Naive thymus-derived CD4-positive, alpha-beta T cell (primary cell): ENCODE measurements at regions of chr12 and their contacts with region 1.

Region 1: DNA sequence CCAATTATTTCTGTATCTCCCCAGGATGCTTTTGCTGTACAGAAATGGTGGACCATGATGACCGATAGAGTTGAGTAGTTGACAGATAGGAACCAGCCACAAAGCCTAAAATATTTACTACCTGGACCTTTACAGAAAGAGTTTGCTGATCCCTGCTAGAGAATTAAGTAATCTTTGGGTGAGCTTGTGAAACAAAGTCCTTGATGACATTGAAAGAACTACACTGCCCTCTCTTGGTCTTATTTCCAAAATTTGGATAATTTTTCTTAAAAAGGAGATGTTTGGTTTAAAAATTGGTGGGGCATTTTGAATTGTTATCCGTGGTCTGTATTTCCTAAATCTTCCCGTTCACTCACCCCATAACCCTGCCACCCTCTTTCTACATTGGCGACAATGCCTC is 13.7 kb upstream of the TCTN1 start:
- DNase-seq: peak in 7 of 9 donors; percentile 36 to 69 (median 56)
- ATAC-seq: peak; percentile 70
- H3K4me3 ChIP-seq: no peak overlapping the region
- H3K4me3 Mint-ChIP-seq: no peak overlapping the region
- H3K27ac ChIP-seq: no peak overlapping the region
- H3K27ac Mint-ChIP-seq: peak overlapping the region in 6 of 9 donors; percentile 6 to 63 (median 24)
- H3K4me1 ChIP-seq: no peaks in the 10 kb centered on the region
- H3K4me1 Mint-ChIP-seq: peaks cover 4 to 21% (median 15%) of the 10 kb centered on the region in 7 donors
- H3K27me3 ChIP-seq: no peaks in the 10 kb centered on the region
- H3K27me3 Mint-ChIP-seq: no peaks in the 10 kb centered on the region

Region 2: GRCh38 chr12:110100315-110100970 is 499.8 kb before region 1 on chr12:
- CTCF ChIA-PET with region 1: interaction called, 3 read pairs
- POLR2A ChIA-PET with region 1: no interaction called
- intact Hi-C with region 1: loop called (anchors 1 to 5 kb)
- DNase-seq: peak in 8 of 9 donors; percentile 33 to 60 (median 55)
- ATAC-seq: peak; percentile 92
- H3K4me3 ChIP-seq: no peak overlapping the region
- H3K4me3 Mint-ChIP-seq: peak overlapping the region in 2 of 10 donors; percentile 12 to 44
- H3K27ac ChIP-seq: no peak overlapping the region
- H3K27ac Mint-ChIP-seq: peak overlapping the region in 4 of 9 donors; percentile 3 to 69 (median 42)
- H3K4me1 ChIP-seq: peaks cover 3 to 4% of the 10 kb centered on the region in 2 donors
- H3K4me1 Mint-ChIP-seq: peaks cover 0 to 13% (median 8%) of the 10 kb centered on the region in 7 donors
- H3K27me3 ChIP-seq: no peaks in the 10 kb centered on the region
- H3K27me3 Mint-ChIP-seq: no peaks in the 10 kb centered on the region

Region 3: DNA sequence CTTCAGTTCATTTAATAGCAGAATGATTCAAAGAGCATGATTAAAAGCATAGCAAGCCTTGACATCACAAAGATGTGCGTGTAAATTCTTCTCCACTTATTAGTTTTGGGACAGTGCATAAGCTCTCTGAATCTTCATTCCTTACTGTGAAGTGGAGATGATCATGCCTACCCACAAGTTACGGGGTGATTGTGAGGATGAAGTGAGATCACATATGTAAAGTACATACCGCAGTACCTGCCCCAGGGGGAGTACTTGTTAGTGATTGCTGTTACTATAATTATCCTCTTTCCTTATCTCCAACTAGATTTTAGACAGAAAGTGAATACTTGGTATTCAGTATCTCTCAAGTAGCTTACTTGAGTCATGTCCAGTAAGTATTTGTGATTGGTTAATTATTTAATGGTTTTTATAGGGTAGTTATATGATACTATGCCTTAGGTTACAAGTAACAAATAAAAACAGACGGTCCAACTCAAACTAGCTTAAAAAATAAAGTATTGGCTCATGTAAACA is 92.1 kb before region 1 on chr12:
- CTCF ChIA-PET with region 1: interaction called, 58 read pairs
- POLR2A ChIA-PET with region 1: interaction called, 3 read pairs
- intact Hi-C with region 1: loop called (anchors 1 kb)
- DNase-seq: no peak
- ATAC-seq: no peak
- H3K4me3 ChIP-seq: no peak overlapping the region
- H3K4me3 Mint-ChIP-seq: no peak overlapping the region
- H3K27ac ChIP-seq: no peak overlapping the region
- H3K27ac Mint-ChIP-seq: no peak overlapping the region
- H3K4me1 ChIP-seq: no peaks in the 10 kb centered on the region
- H3K4me1 Mint-ChIP-seq: peaks cover 0 to 3% (median 0%) of the 10 kb centered on the region in 7 donors
- H3K27me3 ChIP-seq: no peaks in the 10 kb centered on the region
- H3K27me3 Mint-ChIP-seq: peaks cover 0 to 5% (median 0%) of the 10 kb centered on the region in 5 donors

Region 4: DNA sequence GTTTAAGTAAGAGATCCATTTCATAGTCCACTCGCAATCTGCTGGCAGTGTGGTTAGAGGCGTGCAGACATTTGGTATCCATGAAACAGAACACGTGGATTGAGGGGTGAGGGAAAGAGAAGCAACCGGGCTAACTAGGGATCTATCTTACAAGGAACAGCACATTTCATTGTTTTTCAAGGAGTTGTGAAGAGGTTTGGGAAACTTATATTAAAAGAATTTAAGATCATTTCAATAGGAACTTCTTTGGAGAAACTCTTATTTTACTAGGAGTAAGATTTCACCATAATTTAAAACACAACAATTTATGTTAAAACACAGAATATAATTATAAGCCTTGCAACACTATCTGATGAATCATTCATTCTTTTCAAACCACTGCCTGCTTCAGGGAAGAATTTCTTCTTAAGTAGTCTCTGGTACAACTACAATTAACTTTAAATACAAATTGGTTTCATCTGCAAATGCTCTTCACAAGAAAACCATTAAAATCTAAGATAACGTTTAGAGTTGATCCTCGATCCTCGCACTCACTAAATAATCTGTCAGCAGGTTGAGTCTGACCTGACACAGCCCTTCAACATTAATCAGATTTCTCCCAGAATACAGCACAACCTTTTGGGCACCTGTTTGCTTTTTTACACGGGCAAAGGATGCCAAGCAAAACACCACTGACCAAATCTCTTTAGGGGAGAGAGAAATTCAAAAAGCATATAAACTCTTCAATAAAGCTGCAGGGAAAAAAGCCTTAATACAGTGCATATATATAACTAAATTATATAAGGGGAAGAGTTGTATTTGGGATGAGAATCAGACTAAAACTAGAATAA is 44.5 kb before region 1 on chr12:
- CTCF ChIA-PET with region 1: interaction called, 171 read pairs
- POLR2A ChIA-PET with region 1: interaction called, 38 read pairs
- intact Hi-C with region 1: loop called (anchors 1 kb)
- DNase-seq: no peak
- ATAC-seq: no peak
- H3K4me3 ChIP-seq: no peak overlapping the region
- H3K4me3 Mint-ChIP-seq: peak overlapping the region in 3 of 10 donors; percentile 5 to 49 (median 18)
- H3K27ac ChIP-seq: no peak overlapping the region
- H3K27ac Mint-ChIP-seq: peak overlapping the region in 6 of 9 donors; percentile 1 to 77 (median 43)
- H3K4me1 ChIP-seq: peaks cover 0 to 18% of the 10 kb centered on the region in 2 donors
- H3K4me1 Mint-ChIP-seq: peaks cover 32 to 75% (median 63%) of the 10 kb centered on the region in 7 donors
- H3K27me3 ChIP-seq: no peaks in the 10 kb centered on the region
- H3K27me3 Mint-ChIP-seq: no peaks in the 10 kb centered on the region

Region 5: DNA sequence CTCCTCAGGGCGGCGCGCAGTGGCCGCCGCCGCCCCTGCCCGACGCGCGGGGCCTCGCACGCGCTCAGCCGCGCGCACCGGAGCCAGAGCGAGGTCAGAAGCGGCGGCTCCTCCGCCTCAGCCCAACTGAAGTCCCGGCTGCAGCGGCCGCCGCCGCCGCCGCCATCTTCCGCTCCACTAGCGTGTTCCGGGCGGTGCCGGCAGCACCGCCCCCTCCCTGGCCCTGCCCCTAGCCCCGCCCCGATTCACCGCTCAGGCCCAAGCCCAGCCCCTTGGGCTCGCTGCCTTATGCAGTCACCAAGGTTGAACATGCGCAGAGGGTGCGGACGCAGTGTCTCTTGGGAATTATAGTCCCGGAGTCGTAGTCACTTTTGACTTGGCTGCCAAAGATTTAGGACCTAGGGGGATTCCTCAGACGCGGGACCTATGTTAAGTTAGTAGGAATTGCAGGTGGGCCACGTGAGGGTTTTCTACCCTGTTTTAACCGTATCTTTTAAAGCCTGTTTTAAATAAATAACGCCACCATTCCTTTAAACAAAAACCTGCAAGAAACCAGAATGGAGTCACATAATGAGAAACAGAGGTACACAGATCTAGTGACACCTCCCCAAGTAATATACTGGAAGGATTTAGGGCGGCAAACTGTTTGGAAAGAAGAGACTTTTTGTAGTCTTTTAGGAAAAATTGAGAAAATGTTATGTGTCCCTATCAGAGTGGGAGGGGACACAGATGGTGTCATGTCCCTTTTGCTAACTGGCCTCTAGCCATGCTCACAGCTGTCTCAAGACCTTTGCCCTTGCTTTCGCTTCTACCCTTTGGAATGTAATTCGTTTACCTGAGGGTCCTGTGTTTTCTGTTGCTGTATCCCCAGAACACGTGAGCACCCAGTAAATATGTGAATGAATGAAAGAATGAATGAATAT is 16.9 kb before region 1 on chr12 and contains the start of gene PPTC7:
- CTCF ChIA-PET with region 1: interaction called, 33 read pairs
- POLR2A ChIA-PET with region 1: interaction called, 14 read pairs
- intact Hi-C with region 1: loop called (anchors 1 kb)
- DNase-seq: peak; percentile 84 to 97 (median 93)
- ATAC-seq: peak; percentile 98
- H3K4me3 ChIP-seq: peak within 1 kb of the TSS; percentile 72
- H3K4me3 Mint-ChIP-seq: peak within 1 kb of the TSS; percentile 91 to 97 (median 95)
- H3K27ac ChIP-seq: peak within 1 kb of the TSS; percentile 97
- H3K27ac Mint-ChIP-seq: peak within 1 kb of the TSS; percentile 93 to 97 (median 95)
- H3K4me1 ChIP-seq: peaks cover 26 to 55% of the 10 kb centered on the region in 2 donors
- H3K4me1 Mint-ChIP-seq: peaks cover 53 to 74% (median 67%) of the 10 kb centered on the region in 7 donors
- H3K27me3 ChIP-seq: no peaks in the 10 kb centered on the region
- H3K27me3 Mint-ChIP-seq: no peaks in the 10 kb centered on the region
- total RNA-seq, gene PPTC7: 36.7 to 43.8 (median 38.8) TPM

Region 6: DNA sequence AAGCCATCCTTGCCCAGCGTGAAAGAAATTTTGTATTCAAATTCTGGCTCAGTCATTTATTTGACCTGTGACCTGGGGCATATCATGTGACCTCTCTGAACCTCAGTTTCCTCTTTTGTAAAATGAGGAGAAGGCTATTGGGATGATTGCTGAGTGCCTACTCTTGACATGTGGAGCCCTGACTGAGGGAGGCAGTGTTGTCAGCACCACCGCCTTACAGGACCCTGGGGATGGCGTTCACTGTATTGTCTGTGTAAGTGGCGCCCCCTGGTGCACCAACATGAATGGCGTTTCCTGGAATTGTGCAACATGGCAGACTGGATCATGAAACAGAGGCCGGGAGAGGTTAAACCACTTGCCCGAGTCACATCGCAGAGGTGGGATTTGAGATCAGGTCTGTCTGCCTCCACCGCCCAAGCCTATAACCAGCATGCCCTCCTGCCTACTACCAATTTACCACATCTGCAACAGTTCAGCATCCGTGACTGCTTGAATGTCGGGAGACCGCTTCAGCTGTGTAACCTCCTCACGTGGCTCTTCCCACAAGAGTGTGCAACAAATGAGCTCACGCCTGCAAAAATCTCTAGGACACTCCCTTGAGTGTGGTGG is 226.4 kb after region 1 on chr12:
- CTCF ChIA-PET with region 1: interaction called, 9 read pairs
- POLR2A ChIA-PET with region 1: no interaction called
- intact Hi-C with region 1: loop called in 1 of 2 experiments (anchors 1 kb)
- DNase-seq: peak; percentile 61 to 85 (median 77)
- ATAC-seq: peak; percentile 98
- H3K4me3 ChIP-seq: no peak overlapping the region
- H3K4me3 Mint-ChIP-seq: peak overlapping the region in 9 of 10 donors; percentile 35 to 75 (median 58)
- H3K27ac ChIP-seq: no peak overlapping the region
- H3K27ac Mint-ChIP-seq: peak overlapping the region in 8 of 9 donors; percentile 4 to 81 (median 20)
- H3K4me1 ChIP-seq: no peaks in the 10 kb centered on the region
- H3K4me1 Mint-ChIP-seq: peaks cover 0 to 10% (median 6%) of the 10 kb centered on the region in 7 donors
- H3K27me3 ChIP-seq: no peaks in the 10 kb centered on the region
- H3K27me3 Mint-ChIP-seq: peaks cover 0 to 4% (median 0%) of the 10 kb centered on the region in 5 donors